BJ (cell line): ENCODE measurements at regions of chr13 and their contacts with region 1.

Region 1: GRCh38 chr13:33723772-33724435 is 94.0 kb upstream of the RFC3 start:
- DNase-seq: no peak
- H3K4me3 ChIP-seq: no peak overlapping the region
- H3K27me3 ChIP-seq: no peaks in the 10 kb centered on the region
- CTCF ChIP-seq: peak; percentile 73

Region 2: GRCh38 chr13:33542283-33543088 is 181.4 kb before region 1 on chr13:
- CTCF ChIA-PET with region 1: interaction called, 38 read pairs
- POLR2A ChIA-PET with region 1: interaction called, 4 read pairs
- DNase-seq: peak; percentile 95
- H3K4me3 ChIP-seq: peak overlapping the region; percentile 36
- H3K27me3 ChIP-seq: no peaks in the 10 kb centered on the region
- CTCF ChIP-seq: peak; percentile 91

Region 3: GRCh38 chr13:33953203-33953602 is 229.3 kb after region 1 on chr13:
- CTCF ChIA-PET with region 1: no interaction called
- POLR2A ChIA-PET with region 1: no interaction called
- DNase-seq: peak; percentile 81
- H3K4me3 ChIP-seq: no peak overlapping the region
- H3K27me3 ChIP-seq: no peaks in the 10 kb centered on the region
- CTCF ChIP-seq: no peak

Region 4: DNA sequence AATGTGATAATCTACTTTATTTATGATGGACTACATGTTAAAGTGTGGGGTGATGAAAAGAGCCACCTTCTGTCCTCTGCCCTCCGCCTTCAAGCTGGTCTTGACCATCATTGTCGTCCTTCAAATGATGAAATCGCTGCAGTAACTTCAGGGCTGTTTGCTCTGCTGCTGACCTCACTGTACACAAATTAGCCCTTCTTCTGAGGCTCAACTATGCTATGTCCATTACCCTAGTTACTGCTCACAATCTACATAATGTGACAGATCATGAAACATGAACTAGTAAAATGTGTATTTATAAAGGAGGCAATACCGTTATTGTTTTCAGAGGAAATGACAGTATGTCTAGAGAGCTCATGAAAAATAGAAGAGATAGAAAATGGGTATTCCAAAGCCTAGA is 240.0 kb after region 1 on chr13:
- CTCF ChIA-PET with region 1: no interaction called
- POLR2A ChIA-PET with region 1: no interaction called
- DNase-seq: no peak
- H3K4me3 ChIP-seq: no peak overlapping the region
- H3K27me3 ChIP-seq: no peaks in the 10 kb centered on the region
- CTCF ChIP-seq: no peak